RWPE1 (cell line): ENCODE measurements at regions of chr20 and their contacts with region 1.

Region 1: GRCh38 chr20:47379433-47380150 is 23.1 kb upstream of the ZMYND8 start:
- DNase-seq: no peak
- H3K27ac ChIP-seq: peak overlapping the region; percentile 67
- CTCF ChIP-seq: no peak

Region 2: GRCh38 chr20:47196091-47197081 is 183.2 kb before region 1 on chr20:
- CTCF ChIA-PET with region 1: interaction called, 33 read pairs
- POLR2A ChIA-PET with region 1: interaction called, 10 read pairs
- DNase-seq: peak; percentile 89
- H3K27ac ChIP-seq: no peak overlapping the region
- CTCF ChIP-seq: peak; percentile 99

Region 3: DNA sequence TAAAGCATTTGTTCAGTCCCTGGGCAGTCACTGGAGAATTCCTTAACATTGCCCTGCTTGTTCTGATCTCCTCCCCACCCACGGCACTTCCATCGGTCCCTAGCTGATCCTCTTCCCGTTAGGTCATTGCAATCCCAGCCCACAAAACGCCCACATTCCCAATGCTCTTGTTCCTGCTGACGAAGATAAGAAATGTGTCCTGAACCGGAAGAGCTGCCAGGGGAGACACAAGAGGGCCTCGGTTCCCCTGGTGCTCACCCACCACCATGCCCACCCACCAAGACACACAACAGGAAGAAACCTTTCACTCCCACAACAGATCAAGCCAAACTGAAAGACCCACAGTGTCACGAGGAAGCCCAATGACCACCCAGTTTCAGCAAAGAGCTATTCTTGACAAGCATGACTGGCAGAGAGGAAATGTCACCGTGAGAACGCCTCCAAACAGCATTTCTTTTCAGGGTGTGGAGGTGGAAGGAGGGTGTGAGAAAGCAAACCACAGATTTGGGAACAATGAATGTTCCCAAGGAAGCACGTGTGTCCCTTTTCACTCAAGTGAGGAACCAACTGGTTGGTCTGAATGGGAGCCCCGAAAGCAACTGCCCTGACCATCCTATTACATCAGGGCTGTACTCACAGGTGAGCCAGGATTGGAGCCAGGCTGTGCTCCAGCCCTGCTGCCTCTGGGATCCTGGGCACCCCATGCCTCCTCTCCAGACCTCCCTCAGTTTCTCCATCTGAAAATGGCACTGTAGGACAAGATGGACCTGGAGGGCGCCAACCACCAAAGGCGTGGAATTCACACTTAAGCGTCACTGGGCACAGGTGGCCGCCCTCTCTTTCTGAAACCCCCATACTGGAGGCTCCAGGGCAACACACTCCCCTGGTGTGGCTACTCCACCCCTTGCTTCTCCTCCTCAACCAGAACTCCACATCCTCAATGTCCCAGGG is 120.6 kb before region 1 on chr20:
- CTCF ChIA-PET with region 1: interaction called, 15 read pairs
- POLR2A ChIA-PET with region 1: no interaction called
- DNase-seq: no peak
- H3K27ac ChIP-seq: peak overlapping the region; percentile 59
- CTCF ChIP-seq: no peak

Region 4: DNA sequence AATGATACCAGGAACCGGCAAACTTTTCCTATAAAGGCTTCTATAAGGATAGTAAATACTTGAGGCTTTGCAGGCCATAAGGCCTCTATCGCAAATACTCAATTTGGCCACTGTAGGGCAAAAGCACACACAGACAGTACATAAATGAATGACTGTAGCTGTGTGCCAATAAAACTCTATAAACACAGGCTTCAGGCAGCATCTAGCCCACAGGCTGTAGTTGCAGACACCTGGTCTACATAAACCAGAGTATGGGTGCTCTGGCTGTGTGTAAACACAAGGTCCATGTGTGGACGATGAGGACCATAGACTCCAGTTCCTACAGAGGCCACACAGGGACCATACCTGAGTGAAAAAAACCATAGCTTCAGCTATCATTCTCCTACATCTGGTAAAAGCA is 75.3 kb before region 1 on chr20:
- CTCF ChIA-PET with region 1: interaction called, 31 read pairs
- POLR2A ChIA-PET with region 1: no interaction called
- DNase-seq: no peak
- H3K27ac ChIP-seq: peak overlapping the region; percentile 70
- CTCF ChIP-seq: no peak

Region 5: GRCh38 chr20:47356526-47357295 is 22.9 kb before region 1 on chr20 and contains the start of gene ZMYND8:
- CTCF ChIA-PET with region 1: interaction called, 39 read pairs
- POLR2A ChIA-PET with region 1: interaction called, 9 read pairs
- DNase-seq: peak; percentile 100
- H3K27ac ChIP-seq: peak within 1 kb of the TSS; percentile 100
- CTCF ChIP-seq: no peak

Region 6: GRCh38 chr20:47487175-47487917 is 107.8 kb after region 1 on chr20:
- CTCF ChIA-PET with region 1: interaction called, 13 read pairs
- POLR2A ChIA-PET with region 1: no interaction called
- DNase-seq: no peak
- H3K27ac ChIP-seq: peak overlapping the region; percentile 44
- CTCF ChIP-seq: no peak

Region 7: DNA sequence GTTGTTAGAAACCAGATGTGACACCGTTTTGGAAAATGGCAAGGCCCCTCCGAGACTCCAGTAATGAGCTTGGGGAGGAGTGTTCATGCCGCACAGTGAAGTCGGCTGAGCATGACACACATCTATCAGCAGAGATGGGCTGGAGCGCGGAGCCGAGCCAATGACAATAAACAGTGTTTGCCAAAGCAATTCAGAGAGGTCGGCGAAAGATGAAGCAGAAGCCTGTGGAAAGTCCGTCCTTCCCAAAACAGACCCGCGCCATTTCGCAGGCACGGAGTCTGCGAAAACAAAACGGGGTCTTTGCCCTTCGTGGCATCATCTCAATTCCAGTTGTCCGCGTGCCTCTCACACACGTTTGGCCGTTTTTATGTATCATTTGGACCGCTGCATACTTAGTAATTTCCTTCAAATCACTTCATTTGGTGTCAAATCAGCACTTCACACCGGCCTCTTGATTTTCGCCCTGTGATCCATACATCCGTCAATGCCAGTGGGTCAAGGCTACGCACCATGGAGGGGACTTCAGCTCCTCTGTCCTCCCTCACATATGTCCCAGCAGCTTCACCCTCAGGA is 334.4 kb after region 1 on chr20:
- CTCF ChIA-PET with region 1: no interaction called
- POLR2A ChIA-PET with region 1: no interaction called
- DNase-seq: no peak
- H3K27ac ChIP-seq: peak overlapping the region; percentile 33
- CTCF ChIP-seq: no peak